Activated CD4-positive, alpha-beta memory T cell treated with anti-CD3 and anti-CD28 coated beads for 36 hours (primary cell): ENCODE measurements at regions of chr10 and their contacts with region 1.

Region 1: DNA sequence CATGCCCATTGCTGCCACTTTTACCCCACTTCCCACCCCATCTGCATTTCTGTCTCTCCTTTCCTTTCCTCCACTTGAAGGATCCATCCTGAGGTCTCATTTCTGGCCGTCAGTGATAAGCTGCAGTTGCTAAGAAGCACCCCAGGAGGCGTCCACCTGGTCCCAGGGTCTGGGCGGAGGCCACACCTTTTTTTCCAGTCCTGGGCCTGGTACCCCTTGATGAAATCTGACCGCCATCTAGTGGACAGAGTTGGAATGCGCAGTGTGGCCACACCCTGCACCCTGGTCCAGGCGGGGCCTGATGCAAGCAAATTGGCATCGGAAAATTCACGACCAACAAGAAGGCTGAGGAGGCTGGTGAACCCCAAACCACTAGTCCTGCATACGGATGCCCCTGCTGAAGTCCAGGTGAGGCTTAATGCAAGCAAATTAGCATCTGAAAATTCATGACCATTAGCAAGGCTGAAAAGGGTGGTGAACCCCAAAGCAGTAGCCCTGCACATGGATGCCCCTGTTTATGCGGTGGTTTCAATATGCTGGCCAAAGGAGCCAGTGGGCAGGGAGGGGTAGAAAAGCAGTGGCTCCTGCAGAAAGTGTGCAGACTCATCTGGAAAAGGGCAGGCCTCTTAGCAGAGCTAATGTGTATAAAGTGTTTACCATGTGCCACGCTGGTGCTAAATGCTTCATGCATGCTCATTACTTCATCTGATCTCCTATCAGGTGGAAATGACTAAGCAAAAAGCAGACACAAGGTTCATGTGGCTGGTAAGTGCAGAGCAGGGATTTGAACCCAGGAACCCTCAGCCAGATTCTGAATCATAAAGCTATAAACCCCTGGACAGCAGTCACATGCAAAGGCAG is 43.2 kb downstream of the GPAM start:
- DNase-seq: peak; percentile 86
- H3K4me3 Mint-ChIP-seq: no peak overlapping the region
- H3K27ac Mint-ChIP-seq: no peak overlapping the region
- H3K4me1 Mint-ChIP-seq: no peaks in the 10 kb centered on the region
- H3K27me3 Mint-ChIP-seq: no peaks in the 10 kb centered on the region

Region 2: DNA sequence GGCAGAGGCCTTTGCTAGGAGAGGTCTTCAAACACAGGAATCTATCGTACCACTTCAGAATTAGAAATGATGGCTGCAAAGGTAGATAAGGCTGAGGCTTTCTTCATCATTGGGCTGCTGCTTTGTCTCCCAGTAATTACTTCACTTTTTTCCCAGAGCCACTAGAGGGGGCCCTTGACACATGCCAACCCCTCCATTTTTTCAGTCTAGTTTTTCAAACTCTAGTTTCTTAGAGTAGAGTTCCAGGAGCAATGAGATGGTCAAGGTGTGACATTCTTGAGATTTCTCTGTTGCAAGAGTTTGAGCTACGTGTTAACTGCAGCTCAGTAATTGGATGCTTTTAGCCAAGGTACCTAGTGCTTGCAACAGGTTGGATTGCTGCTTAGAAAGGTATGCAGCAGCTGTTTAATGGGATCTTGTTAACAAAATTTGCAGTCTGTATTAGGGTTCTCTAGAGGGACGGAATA is 1530.0 kb before region 1 on chr10:
- CTCF ChIA-PET with region 1: interaction called, 3 read pairs
- POLR2A ChIA-PET with region 1: no interaction called
- intact Hi-C with region 1: loop called (anchors 10 kb)
- DNase-seq: peak; percentile 66
- H3K4me3 Mint-ChIP-seq: no peak overlapping the region
- H3K27ac Mint-ChIP-seq: no peak overlapping the region
- H3K4me1 Mint-ChIP-seq: peaks cover 26% of the 10 kb centered on the region
- H3K27me3 Mint-ChIP-seq: no peaks in the 10 kb centered on the region

Region 3: GRCh38 chr10:111756217-111757061 is 383.9 kb before region 1 on chr10:
- CTCF ChIA-PET with region 1: interaction called, 16 read pairs
- POLR2A ChIA-PET with region 1: no interaction called
- intact Hi-C with region 1: no loop called
- DNase-seq: peak; percentile 21
- H3K4me3 Mint-ChIP-seq: no peak overlapping the region
- H3K27ac Mint-ChIP-seq: no peak overlapping the region
- H3K4me1 Mint-ChIP-seq: no peaks in the 10 kb centered on the region
- H3K27me3 Mint-ChIP-seq: peaks cover 8% of the 10 kb centered on the region

Region 4: GRCh38 chr10:112122827-112123226 is 17.5 kb before region 1 on chr10:
- CTCF ChIA-PET with region 1: interaction called, 33 read pairs
- POLR2A ChIA-PET with region 1: no interaction called
- intact Hi-C with region 1: no loop called
- DNase-seq: no peak
- H3K4me3 Mint-ChIP-seq: no peak overlapping the region
- H3K27ac Mint-ChIP-seq: no peak overlapping the region
- H3K4me1 Mint-ChIP-seq: no peaks in the 10 kb centered on the region
- H3K27me3 Mint-ChIP-seq: no peaks in the 10 kb centered on the region

Region 5: GRCh38 chr10:112151524-112152039 is 11.2 kb after region 1 on chr10:
- CTCF ChIA-PET with region 1: interaction called, 71 read pairs
- POLR2A ChIA-PET with region 1: no interaction called
- intact Hi-C with region 1: no loop called
- DNase-seq: no peak
- H3K4me3 Mint-ChIP-seq: no peak overlapping the region
- H3K27ac Mint-ChIP-seq: no peak overlapping the region
- H3K4me1 Mint-ChIP-seq: no peaks in the 10 kb centered on the region
- H3K27me3 Mint-ChIP-seq: no peaks in the 10 kb centered on the region

Region 6: GRCh38 chr10:112314822-112315474 is 174.6 kb after region 1 on chr10:
- CTCF ChIA-PET with region 1: interaction called, 27 read pairs
- POLR2A ChIA-PET with region 1: no interaction called
- intact Hi-C with region 1: loop called (anchors 1 kb)
- DNase-seq: peak; percentile 83
- H3K4me3 Mint-ChIP-seq: no peak overlapping the region
- H3K27ac Mint-ChIP-seq: no peak overlapping the region
- H3K4me1 Mint-ChIP-seq: no peaks in the 10 kb centered on the region
- H3K27me3 Mint-ChIP-seq: peaks cover 22% of the 10 kb centered on the region